ENCODE measurements at regions of chr11 and their contacts with region 1.

Region 1: GRCh38 chr11:33065445-33066178 is 26.2 kb downstream of the TCP11L1 start:
- DNase-seq: peak; percentile 88
- ATAC-seq: peak; percentile 96
- H3K4me3 Mint-ChIP-seq: no peak overlapping the region
- H3K27ac Mint-ChIP-seq: no peak overlapping the region; the same call in 1 of the 2 replicates
- H3K4me1 Mint-ChIP-seq: peaks cover 19% of the 10 kb centered on the region
- H3K27me3 Mint-ChIP-seq: no peaks in the 10 kb centered on the region
- CTCF ChIP-seq: peak; percentile 78

Region 2: DNA sequence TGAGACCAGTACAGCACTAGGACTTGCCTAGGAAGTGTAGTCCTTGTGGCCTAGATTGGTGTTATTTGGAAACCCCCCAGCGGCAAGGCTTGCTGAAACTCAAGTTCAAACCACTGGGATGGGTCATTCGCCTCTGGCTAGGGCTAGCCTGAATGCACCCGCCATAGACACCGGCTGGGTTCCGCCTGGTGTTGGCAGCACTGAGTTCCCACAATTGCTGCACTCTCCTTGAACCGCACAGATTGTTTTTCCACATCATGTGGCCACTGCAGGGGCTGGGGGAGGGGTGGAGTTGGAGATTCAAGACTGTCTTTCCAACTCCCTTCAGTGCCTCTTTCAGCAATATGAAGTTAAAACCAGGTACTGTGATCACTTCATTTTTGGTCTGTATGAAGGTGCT is 314.2 kb before region 1 on chr11:
- CTCF ChIA-PET with region 1: interaction called, 12 read pairs
- POLR2A ChIA-PET with region 1: no interaction called
- DNase-seq: peak; percentile 43
- ATAC-seq: peak; percentile 81
- H3K4me3 Mint-ChIP-seq: no peak overlapping the region
- H3K27ac Mint-ChIP-seq: no peak overlapping the region
- H3K4me1 Mint-ChIP-seq: no peaks in the 10 kb centered on the region
- H3K27me3 Mint-ChIP-seq: peaks cover 8% of the 10 kb centered on the region
- CTCF ChIP-seq: no peak

Region 3: DNA sequence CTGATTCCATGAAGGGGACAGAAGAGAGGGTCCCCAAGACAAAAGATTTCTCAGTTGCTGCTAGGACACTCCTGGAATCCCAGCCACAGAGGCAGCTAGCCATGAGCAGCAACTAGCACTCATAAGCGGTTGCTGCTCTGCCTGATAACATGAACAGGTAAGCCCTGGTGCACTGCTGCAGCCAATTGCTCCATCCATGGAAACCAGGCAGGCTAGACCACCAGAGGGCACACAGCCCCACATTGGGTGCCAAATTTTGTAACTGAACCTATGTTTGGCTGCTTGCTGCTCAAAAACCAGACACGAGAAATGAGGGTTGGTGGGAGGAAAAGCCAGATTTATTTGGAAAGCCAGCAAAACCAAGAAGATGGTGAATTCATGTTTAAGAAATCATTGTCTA is 194.9 kb before region 1 on chr11:
- CTCF ChIA-PET with region 1: interaction called, 13 read pairs
- POLR2A ChIA-PET with region 1: no interaction called
- DNase-seq: peak; percentile 61
- ATAC-seq: peak; percentile 97
- H3K4me3 Mint-ChIP-seq: no peak overlapping the region
- H3K27ac Mint-ChIP-seq: no peak overlapping the region; the same call in 1 of the 2 replicates
- H3K4me1 Mint-ChIP-seq: peaks cover 6% of the 10 kb centered on the region
- H3K27me3 Mint-ChIP-seq: no peaks in the 10 kb centered on the region; the same call in none of the 2 replicates
- CTCF ChIP-seq: peak; percentile 27; the same call in 1 of the 2 replicates

Region 4: DNA sequence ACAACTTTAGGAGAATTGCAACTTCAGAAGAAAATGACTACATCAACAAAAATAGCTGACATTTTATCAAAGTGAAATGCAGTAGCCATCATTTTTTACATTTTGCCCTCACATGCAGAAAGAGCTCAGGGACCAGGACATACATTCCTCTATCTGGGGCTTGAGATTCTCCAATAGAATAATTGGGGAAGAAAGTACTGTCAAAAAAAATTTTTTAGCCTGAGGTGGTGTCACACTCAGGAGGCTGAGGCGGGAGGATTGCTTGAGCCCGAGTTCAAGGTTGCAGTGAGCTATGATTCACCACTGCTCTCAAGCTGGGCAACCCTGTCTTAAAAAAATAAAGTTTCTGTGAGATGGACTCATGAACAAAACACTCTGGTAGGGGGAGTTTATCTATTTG is 82.1 kb before region 1 on chr11:
- CTCF ChIA-PET with region 1: interaction called, 13 read pairs
- POLR2A ChIA-PET with region 1: no interaction called
- DNase-seq: no peak
- ATAC-seq: no peak
- H3K4me3 Mint-ChIP-seq: no peak overlapping the region
- H3K27ac Mint-ChIP-seq: peak overlapping the region; percentile 86; the same call in 1 of the 2 replicates
- H3K4me1 Mint-ChIP-seq: peaks cover 6% of the 10 kb centered on the region; the same call in 1 of the 2 replicates
- H3K27me3 Mint-ChIP-seq: no peaks in the 10 kb centered on the region; the same call in 1 of the 2 replicates
- CTCF ChIP-seq: no peak

Region 5: GRCh38 chr11:33039274-33040032 is 26.2 kb before region 1 on chr11 and contains the start of gene TCP11L1:
- CTCF ChIA-PET with region 1: interaction called, 16 read pairs
- POLR2A ChIA-PET with region 1: interaction called, 3 read pairs
- DNase-seq: peak; percentile 94
- ATAC-seq: peak; percentile 89
- H3K4me3 Mint-ChIP-seq: peak within 1 kb of the TSS; percentile 84
- H3K27ac Mint-ChIP-seq: peak within 1 kb of the TSS; percentile 96
- H3K4me1 Mint-ChIP-seq: peaks cover 10% of the 10 kb centered on the region
- H3K27me3 Mint-ChIP-seq: no peaks in the 10 kb centered on the region
- CTCF ChIP-seq: no peak
- total RNA-seq, gene TCP11L1: 16.8 to 19.4 TPM (median 18.5 TPM) in 3 replicates

Region 6: GRCh38 chr11:33086017-33086416 is 20.4 kb after region 1 on chr11:
- CTCF ChIA-PET with region 1: interaction called, 11 read pairs
- POLR2A ChIA-PET with region 1: no interaction called
- DNase-seq: no peak
- ATAC-seq: no peak
- H3K4me3 Mint-ChIP-seq: no peak overlapping the region
- H3K27ac Mint-ChIP-seq: peak overlapping the region; percentile 72
- H3K4me1 Mint-ChIP-seq: no peaks in the 10 kb centered on the region
- H3K27me3 Mint-ChIP-seq: no peaks in the 10 kb centered on the region
- CTCF ChIP-seq: no peak

Measured in WTC11 (cell line).